ENCODE measurements at regions of chr9 and their contacts with region 1.

Region 1: DNA sequence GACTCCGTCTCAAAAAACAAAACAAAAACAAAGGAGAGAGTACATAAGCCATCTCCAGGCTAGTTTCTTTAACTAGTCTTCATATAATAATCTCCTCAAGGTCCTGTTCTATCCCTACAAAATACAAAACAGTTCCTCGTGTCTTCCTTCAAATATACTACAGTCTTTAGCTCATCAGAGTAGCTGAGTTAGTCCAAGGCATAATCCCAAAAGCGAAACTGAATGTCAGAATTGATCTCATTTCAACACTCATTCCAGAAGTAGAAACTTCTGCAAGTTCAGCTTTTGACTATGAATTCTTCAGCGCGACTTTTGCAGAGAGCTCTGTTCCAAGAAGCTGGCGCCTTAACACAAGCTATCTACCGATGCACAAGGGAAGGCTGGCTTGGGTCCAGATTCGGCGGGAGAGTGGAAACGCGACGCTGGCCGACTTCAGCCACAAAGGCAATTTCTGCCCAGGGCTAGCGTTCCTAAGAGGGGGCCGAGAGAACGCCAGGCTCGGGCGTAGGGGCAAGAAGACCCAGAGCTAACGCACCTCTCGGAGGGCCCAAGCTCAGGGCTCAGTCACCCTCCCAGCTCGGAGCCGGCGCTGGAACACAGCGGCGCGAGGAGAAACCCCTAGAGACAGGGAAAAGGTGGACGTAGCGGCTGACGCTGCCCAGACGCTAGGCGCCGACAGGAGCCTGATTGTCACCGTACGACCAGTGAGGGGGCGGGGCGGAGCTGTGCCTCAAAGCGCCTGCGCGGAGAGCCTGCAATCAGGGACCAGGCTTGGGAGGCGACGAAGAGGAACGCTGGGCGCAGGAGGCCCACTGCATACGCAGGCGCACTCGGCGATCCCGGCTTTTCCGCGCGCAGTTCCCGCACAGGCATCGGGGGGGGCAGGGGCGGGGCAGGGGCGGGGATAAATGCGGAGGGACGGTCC is 469 bp upstream of the HSDL2 start:
- DNase-seq: peak; percentile 99 to 100
- ATAC-seq: peak; percentile 92

Region 2: DNA sequence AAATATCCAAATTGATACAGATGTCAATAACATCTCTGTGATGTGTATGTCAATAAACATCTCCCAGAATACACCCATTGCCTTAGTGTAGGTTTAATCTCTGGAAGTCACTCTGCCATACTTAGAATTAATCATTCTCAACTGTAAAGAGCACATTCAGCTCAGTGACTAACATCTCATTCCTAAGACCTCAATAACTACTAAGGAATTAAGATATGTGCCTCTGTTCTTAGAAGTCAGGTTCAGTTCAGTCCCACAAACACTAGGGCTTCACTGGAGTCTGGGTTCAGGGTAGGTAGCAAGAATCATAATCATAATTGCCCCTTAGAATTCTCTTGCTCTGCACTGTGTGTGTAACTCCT is 451.1 kb before region 1 on chr9:
- intact Hi-C with region 1: no loop called
- DNase-seq: no peak
- ATAC-seq: peak; percentile 40

Region 3: DNA sequence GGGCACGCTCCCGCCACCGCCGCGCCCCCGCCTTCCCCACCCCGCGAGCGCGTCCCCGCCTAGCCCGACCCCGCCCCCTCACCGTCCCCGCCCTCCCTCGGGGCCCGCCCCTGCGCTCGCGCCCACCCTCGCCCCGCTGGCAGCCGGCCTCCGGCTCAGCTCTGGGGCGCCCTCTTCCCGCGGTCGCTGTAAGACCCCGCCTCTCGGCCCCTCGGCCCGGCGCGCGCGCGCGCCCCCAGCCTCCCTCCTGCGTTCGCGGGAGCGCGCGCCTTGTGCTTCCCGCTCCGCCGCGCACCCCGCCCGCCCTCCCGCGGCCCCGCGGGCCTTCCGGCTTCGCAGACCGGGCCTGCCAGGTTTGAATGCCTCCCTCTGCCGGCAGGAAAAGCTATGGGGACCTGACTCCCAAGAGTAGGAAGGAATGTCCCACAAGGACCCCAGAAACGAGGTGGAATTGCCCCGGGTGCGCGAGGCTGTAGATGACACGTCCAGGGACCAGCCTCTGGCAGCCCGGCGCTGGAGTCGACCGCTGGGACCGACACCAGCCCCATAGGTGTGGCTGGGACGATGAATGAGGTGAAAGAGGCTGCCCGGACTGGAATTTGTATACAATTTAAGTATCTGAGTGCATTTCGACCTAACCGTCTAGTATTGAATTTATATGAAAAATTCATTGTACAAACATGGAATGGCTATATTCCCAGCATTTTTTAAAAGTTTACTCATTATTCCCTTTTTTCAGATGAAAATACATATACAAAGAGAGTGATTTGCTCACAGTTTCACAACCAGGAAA is 45.6 kb before region 1 on chr9:
- intact Hi-C with region 1: loop called in 1 of 2 experiments (anchors 5 kb)
- DNase-seq: peak; percentile 90 to 95
- ATAC-seq: peak; percentile 82

Region 4: GRCh38 chr9:112717661-112718341 is 338.4 kb after region 1 on chr9 and contains the start of gene INIP:
- intact Hi-C with region 1: loop called in 1 of 2 experiments (anchors 10 kb)
- DNase-seq: peak; percentile 97 to 98
- ATAC-seq: peak; percentile 94
- total RNA-seq, gene INIP: 27.3 to 31.9 TPM

Region 5: GRCh38 chr9:112764344-112764743 is 384.9 kb after region 1 on chr9:
- intact Hi-C with region 1: no loop called
- DNase-seq: no peak
- ATAC-seq: peak; percentile 16

Measured in left colon (tissue), 2 donors.